CD4-positive, alpha-beta memory T cell (primary cell): ENCODE measurements at regions of chr13 and their contacts with region 1.

Region 1: GRCh38 chr13:45406421-45406820 is 11.8 kb downstream of the SLC25A30 start:
- DNase-seq: no peak
- H3K4me3 ChIP-seq: no peak overlapping the region
- H3K4me3 Mint-ChIP-seq: no peak overlapping the region
- H3K27ac ChIP-seq: no peak overlapping the region
- H3K27ac Mint-ChIP-seq: peak overlapping the region in 5 of 7 donors; percentile 7 to 93 (median 80)
- H3K4me1 ChIP-seq: no peaks in the 10 kb centered on the region
- H3K4me1 Mint-ChIP-seq: peaks cover 6 to 30% (median 14%) of the 10 kb centered on the region in 4 donors
- H3K27me3 ChIP-seq: no peaks in the 10 kb centered on the region
- H3K27me3 Mint-ChIP-seq: no peaks in the 10 kb centered on the region

Region 2: GRCh38 chr13:45393941-45394570 is 12.4 kb before region 1 on chr13:
- CTCF ChIA-PET with region 1: interaction called, 24 read pairs
- POLR2A ChIA-PET with region 1: interaction called, 5 read pairs
- intact Hi-C with region 1: no loop called
- DNase-seq: peak in 3 of 5 donors; percentile 22 to 31 (median 26)
- H3K4me3 ChIP-seq: no peak overlapping the region
- H3K4me3 Mint-ChIP-seq: no peak overlapping the region
- H3K27ac ChIP-seq: no peak overlapping the region
- H3K27ac Mint-ChIP-seq: peak overlapping the region; percentile 53 to 94 (median 77)
- H3K4me1 ChIP-seq: peaks cover 50% of the 10 kb centered on the region
- H3K4me1 Mint-ChIP-seq: peaks cover 35 to 49% (median 45%) of the 10 kb centered on the region in 4 donors
- H3K27me3 ChIP-seq: no peaks in the 10 kb centered on the region
- H3K27me3 Mint-ChIP-seq: no peaks in the 10 kb centered on the region